ENCODE measurements at regions of chr15 and their contacts with region 1.

Region 1: DNA sequence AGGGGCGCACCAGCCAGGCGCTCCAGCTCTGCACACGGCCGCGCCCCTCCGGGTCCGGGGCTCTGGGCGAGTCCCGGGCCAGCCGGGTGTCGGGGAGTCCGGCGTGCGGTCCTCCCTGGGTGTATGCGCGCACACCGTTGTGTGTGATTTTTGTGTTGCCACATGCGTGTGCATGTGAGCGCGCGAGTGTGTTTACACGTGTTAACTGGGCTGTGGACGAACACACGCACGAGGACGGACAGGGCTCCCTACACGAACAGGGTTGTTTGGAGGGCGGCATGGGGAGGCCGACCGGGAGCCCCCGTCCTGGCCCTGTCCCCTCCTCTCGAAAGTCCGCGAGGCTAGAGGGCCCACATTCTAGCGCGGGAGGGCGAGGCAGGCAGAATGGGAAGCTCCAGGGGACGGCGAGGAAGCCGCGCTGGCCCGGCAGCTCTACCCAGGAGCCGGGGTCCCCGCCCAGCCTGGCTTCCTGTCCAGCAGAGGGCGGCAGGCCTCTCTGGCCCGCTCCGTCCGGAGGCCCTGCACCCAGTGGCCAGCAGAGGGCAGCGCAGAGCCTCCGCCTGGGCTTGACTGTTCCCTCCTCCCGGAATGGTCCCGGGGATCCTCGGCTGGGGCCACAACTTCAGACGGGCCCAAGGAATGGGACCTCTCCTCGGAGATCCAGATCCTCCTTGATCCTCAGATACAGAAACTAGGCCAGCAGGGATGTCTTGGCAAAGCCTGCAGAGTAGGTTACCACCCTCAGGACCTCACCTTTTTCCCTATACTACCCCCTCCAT is 611 bp upstream of the LINGO1 start:
- DNase-seq: peak; percentile 13
- H3K4me3 ChIP-seq: peak overlapping the region; percentile 32
- H3K27me3 ChIP-seq: peaks cover 35% of the 10 kb centered on the region
- CTCF ChIP-seq: peak; percentile 100

Region 2: DNA sequence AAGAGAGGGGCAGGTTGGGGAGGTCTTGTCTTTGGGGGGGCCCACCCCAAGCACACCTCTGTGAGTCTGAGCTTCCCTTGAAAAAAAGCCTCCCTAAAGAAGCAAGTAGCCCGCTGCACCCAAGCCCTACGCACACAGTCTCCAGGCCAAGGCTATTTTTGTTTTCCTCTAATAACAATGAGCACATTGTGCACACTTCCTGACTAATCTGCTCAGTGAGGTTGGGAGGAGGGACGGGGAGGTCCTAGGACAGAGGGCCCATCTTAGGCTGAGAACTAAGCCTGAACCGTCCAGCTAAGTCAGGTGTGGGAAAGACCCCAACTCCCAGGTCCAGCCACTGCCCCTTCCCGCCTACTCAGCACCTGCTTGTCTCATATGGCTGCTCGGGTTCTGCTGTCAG is 125.4 kb before region 1 on chr15:
- CTCF ChIA-PET with region 1: no interaction called
- POLR2A ChIA-PET with region 1: no interaction called
- DNase-seq: no peak
- H3K4me3 ChIP-seq: no peak overlapping the region
- H3K27me3 ChIP-seq: no peaks in the 10 kb centered on the region
- CTCF ChIP-seq: no peak

Region 3: GRCh38 chr15:77607111-77607893 is 26.0 kb before region 1 on chr15:
- CTCF ChIA-PET with region 1: interaction called, 29 read pairs
- POLR2A ChIA-PET with region 1: no interaction called
- DNase-seq: no peak
- H3K4me3 ChIP-seq: no peak overlapping the region
- H3K27me3 ChIP-seq: peaks cover 5% of the 10 kb centered on the region
- CTCF ChIP-seq: no peak

Region 4: DNA sequence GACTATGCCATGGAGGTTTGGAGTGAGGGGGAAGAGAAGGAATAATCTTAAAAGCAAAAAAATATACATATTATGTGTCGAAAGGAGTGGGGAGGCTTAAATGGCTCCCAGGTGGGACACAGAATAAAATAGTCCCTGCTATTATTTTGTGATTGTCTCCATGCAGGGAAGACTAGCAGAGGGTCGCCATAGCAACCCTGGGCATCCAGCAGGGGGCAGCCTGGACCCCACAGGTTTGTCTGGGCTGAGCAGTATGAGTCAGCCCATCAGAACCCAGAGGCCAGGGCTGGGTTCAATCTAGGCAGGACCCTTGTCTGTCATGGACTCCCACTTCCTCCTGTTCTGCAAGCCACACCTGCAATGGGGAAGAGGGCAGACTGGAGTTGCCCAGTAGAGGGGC is 16.9 kb after region 1 on chr15:
- CTCF ChIA-PET with region 1: interaction called, 69 read pairs
- POLR2A ChIA-PET with region 1: no interaction called
- DNase-seq: no peak
- H3K4me3 ChIP-seq: no peak overlapping the region
- H3K27me3 ChIP-seq: peaks cover 13% of the 10 kb centered on the region
- CTCF ChIP-seq: peak; percentile 30; the same call in 1 of the 2 replicates

Region 5: GRCh38 chr15:77784395-77785292 is 151.3 kb after region 1 on chr15:
- CTCF ChIA-PET with region 1: interaction called, 10 read pairs
- POLR2A ChIA-PET with region 1: no interaction called
- DNase-seq: no peak
- H3K4me3 ChIP-seq: no peak overlapping the region
- H3K27me3 ChIP-seq: peaks cover 2% of the 10 kb centered on the region; the same call in 1 of the 2 replicates
- CTCF ChIP-seq: peak; percentile 44

Region 6: DNA sequence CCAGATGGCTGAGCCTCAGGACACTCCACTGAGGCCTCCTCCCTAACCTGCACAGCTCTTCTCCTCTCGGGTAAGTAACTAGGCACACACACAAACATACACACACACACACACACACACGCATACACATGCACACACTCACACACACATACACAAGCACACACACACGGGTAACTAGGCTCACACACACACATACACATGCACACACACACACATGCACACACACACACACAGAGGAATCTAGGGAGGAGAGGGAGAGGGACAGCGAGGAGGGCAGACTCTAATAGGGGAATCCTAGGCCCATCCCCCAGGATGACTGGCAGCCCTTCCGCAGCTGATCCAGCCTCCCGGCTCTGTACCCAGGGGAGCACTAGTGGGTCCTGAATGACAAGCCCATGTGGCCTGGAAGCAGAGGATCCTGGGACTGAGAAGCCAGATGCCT is 176.8 kb after region 1 on chr15:
- CTCF ChIA-PET with region 1: no interaction called
- POLR2A ChIA-PET with region 1: no interaction called
- DNase-seq: no peak
- H3K4me3 ChIP-seq: no peak overlapping the region
- H3K27me3 ChIP-seq: no peaks in the 10 kb centered on the region; the same call in 1 of the 2 replicates
- CTCF ChIP-seq: no peak

Region 7: DNA sequence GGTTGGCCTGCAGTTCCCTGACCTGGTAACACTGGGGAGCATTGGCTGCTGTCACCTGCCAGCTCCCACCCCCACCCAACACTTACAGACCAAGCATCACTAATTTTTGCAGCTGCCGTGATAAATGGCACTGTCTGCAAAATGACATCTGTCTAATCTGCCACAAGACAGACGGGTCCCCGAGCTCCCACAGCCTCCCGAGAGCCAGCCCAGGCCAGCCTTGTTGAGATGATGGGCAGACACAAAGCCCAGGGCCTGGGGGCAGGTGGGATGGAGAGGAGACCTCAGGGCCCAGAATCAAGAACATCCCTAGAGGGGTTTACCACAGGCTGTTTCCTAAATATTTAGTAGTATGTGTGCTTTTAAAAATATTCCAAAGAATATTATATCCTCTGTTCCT is 240.7 kb after region 1 on chr15:
- CTCF ChIA-PET with region 1: interaction called, 10 read pairs
- POLR2A ChIA-PET with region 1: no interaction called
- DNase-seq: no peak
- H3K4me3 ChIP-seq: no peak overlapping the region
- H3K27me3 ChIP-seq: no peaks in the 10 kb centered on the region
- CTCF ChIP-seq: no peak